PC-3 (cell line): ENCODE measurements at regions of chr7 and their contacts with region 1.

Region 1: DNA sequence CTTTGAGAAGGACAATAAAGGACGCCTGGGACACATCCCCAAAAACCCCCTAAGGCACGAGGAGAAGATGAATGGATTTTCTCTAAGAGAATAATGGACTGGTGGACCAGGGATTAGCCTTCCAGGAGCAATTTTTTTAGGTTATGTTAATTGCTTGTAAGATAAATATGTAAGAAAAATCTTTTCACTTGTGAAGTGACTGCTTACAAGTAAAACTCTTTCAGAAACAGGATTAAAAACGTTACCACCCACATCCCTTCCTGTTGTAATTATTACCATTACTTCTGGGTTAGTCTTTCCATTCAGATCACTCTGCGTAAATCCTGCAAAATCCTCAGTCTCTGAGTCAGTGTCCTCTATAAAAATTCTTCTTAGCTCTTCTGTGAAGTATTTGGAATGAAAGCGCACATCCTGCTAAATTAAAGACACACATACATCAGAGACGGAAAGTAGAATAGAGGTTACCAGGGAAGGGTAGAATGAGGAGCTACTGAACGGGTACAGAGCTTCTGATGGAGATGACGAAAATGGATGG is 34.3 kb downstream of the CDCA7L start:
- DNase-seq: peak; percentile 63
- ATAC-seq: peak; percentile 95
- H3K4me3 ChIP-seq: no peak overlapping the region
- H3K27ac ChIP-seq: peak overlapping the region; percentile 57
- H3K4me1 ChIP-seq: peaks cover 15% of the 10 kb centered on the region; the same call in 1 of the 2 replicates
- H3K27me3 ChIP-seq: no peaks in the 10 kb centered on the region
- CTCF ChIP-seq: no peak

Region 2: DNA sequence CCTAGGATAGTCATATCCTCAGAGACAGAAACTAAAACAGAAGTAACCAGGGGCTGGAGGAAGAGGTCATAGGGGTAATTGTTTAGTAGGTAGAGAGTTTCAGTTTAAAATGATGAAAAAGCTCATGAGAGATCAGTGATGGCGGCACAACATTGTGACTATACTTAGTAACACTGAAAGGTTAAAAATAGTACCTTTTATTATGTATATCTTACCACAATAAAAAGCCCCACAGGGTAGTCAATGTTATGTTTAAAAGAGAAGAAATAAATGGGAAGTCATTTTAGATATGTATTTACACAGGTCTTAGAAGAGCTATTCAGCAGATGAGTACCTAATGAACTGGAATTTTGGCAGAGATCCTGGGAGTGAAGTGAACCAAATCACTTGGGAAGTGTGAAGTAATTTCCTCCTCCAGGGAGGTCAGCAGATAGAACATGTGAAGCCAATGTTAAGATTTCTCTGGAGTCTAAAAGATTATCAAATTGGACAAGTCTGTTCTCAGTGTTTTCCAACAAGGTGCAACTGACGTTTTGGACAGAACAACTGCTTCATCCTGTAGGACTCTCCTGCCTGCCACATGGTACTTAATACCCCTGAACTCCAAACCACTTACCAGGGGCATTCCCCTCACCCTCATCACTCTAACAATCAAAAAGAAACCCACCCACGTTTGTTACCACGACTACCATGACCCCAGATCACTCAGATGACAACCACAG is 27.9 kb after region 1 on chr7:
- CTCF ChIA-PET with region 1: interaction called, 4 read pairs
- POLR2A ChIA-PET with region 1: interaction called, 14 read pairs
- intact Hi-C with region 1: loop called (anchors 1 kb)
- DNase-seq: peak; percentile 35
- ATAC-seq: peak; percentile 13
- H3K4me3 ChIP-seq: no peak overlapping the region
- H3K27ac ChIP-seq: peak overlapping the region; percentile 19
- H3K4me1 ChIP-seq: peaks cover 43% of the 10 kb centered on the region
- H3K27me3 ChIP-seq: no peaks in the 10 kb centered on the region
- CTCF ChIP-seq: no peak

Region 3: GRCh38 chr7:21960922-21961321 is 49.5 kb after region 1 on chr7:
- CTCF ChIA-PET with region 1: no interaction called
- POLR2A ChIA-PET with region 1: no interaction called
- intact Hi-C with region 1: loop called (anchors 2 kb)
- DNase-seq: peak; percentile 81
- ATAC-seq: peak; percentile 96
- H3K4me3 ChIP-seq: no peak overlapping the region
- H3K27ac ChIP-seq: no peak overlapping the region
- H3K4me1 ChIP-seq: peaks cover 10% of the 10 kb centered on the region
- H3K27me3 ChIP-seq: no peaks in the 10 kb centered on the region
- CTCF ChIP-seq: no peak